ENCODE measurements at regions of chr7 and their contacts with region 1.

Region 1: DNA sequence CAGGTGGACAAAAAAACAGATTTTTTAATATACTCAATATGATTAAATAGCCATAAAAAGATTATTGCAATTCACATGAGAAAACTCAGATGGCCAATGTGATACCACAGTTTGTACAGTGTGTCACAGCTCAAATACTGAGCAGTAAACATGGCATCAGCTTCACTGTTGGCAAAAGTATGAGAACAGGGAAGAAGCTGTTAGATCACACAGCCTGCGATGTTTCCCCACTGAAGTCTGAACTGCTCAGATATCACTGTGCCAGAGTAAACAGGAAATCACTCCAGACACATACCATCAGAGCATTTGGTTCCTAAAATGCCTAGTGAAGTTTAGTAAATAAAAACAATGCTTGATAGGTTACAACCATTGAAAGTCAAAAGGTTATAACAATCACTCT is 347.8 kb downstream of the ETV1 start:
- DNase-seq: no peak
- H3K4me3 ChIP-seq: no peak overlapping the region
- H3K27ac ChIP-seq: no peak overlapping the region
- H3K4me1 ChIP-seq: no peaks in the 10 kb centered on the region
- H3K27me3 ChIP-seq: no peaks in the 10 kb centered on the region
- CTCF ChIP-seq: no peak
- EP300 ChIP-seq: no peak
- POLR2A ChIP-seq: no peak

Region 2: DNA sequence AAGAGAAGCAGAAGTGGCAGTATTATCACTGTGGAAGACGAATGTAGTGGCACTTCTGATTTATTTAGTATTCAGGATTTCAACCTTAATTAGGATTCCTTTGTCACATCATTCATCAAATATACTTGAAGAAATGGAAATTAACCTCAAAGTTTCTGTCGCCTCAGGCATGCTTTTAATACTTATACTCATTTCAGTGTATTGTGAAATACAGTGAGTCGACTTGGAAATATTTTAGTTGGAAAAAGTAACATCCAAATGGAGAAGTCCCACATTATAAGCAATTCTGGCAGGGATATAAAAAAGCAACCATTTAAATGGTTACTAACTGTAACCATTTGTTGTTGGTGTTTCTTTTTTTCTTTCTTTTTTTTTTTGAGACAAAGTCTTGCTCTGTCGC is 305.5 kb before region 1 on chr7:
- intact Hi-C with region 1: no loop called
- DNase-seq: no peak
- H3K4me3 ChIP-seq: no peak overlapping the region
- H3K27ac ChIP-seq: no peak overlapping the region
- H3K4me1 ChIP-seq: no peaks in the 10 kb centered on the region
- H3K27me3 ChIP-seq: no peaks in the 10 kb centered on the region
- CTCF ChIP-seq: no peak
- EP300 ChIP-seq: no peak
- POLR2A ChIP-seq: no peak

Region 3: GRCh38 chr7:13627455-13627854 is 14.3 kb before region 1 on chr7:
- intact Hi-C with region 1: loop called in 1 of 4 experiments (anchors 1 kb)
- DNase-seq: no peak
- H3K4me3 ChIP-seq: no peak overlapping the region
- H3K27ac ChIP-seq: no peak overlapping the region
- H3K4me1 ChIP-seq: no peaks in the 10 kb centered on the region
- H3K27me3 ChIP-seq: no peaks in the 10 kb centered on the region
- CTCF ChIP-seq: no peak
- EP300 ChIP-seq: no peak
- POLR2A ChIP-seq: no peak